ENCODE measurements at regions of chr14 and their contacts with region 1.

Region 1: DNA sequence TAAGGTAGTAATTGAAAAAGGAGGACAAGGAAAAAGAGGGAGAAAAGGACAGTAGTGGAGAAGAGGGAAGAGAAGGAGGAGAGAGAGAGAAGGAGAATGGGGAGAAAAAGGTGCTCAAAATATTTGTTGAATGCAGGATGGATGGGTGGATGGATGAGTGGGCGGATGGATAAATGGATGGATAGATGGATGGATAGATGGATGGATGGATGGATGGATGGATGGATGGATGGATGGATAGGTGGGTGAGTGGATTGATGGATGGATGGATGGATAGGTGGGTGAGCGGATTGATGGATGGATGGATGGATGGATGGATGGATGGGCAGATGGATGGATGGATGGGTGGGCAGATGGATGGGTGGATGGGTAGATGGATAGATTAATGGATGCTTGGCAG is 21.3 kb upstream of the C14orf132 start:
- DNase-seq: no peak
- ATAC-seq: no peak
- H3K4me3 ChIP-seq: no peak overlapping the region
- H3K27ac ChIP-seq: no peak overlapping the region
- H3K4me1 ChIP-seq: no peaks in the 10 kb centered on the region
- H3K27me3 ChIP-seq: peaks cover 24% of the 10 kb centered on the region
- CTCF ChIP-seq: no peak

Region 2: DNA sequence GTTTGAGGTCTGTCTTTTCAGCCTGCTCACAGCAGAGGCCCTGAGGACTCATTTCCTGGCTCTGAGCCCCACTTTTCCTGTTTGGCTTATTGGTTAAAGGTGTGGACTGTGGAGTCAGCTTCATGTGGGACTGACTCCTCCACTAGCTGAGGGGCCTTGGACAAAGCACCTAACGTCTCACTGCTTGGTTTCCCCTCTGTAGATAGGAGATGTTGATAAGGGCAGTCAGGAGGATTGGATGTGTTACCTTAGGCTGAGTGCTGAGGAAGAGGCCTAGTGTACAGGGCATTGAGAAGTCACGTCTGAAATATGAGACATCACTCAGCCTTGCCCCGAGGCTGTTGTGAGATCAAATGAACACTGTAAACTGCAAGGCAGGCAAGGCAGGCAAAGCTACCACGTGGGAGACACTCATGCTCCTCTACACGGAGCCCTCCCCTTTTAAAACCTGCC is 276.8 kb before region 1 on chr14:
- CTCF ChIA-PET with region 1: no interaction called
- POLR2A ChIA-PET with region 1: interaction called, 10 read pairs
- intact Hi-C with region 1: no loop called
- DNase-seq: peak; percentile 75
- ATAC-seq: no peak; the same call in 1 of the 2 replicates
- H3K4me3 ChIP-seq: no peak overlapping the region
- H3K27ac ChIP-seq: peak overlapping the region; percentile 59
- H3K4me1 ChIP-seq: peaks cover 12% of the 10 kb centered on the region
- H3K27me3 ChIP-seq: no peaks in the 10 kb centered on the region
- CTCF ChIP-seq: no peak

Region 3: DNA sequence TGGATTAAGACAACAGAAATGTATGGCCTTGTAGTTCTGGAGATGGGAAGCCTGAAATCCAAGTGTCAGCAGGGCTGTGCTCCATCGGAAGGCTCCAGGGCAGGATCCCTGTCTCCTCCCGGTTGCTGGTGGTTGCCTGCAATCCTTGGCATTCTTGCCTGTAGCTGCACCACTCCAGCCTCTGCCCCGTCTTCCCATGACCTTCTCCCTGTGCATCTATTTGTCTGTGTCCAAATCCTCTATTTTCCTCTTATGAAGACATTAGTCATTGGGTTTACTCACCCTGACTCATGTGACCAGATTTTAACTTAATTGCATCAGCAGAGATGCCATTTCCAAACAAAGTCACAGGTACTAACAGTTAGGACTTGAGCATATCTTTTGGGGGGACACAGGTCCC is 126.1 kb before region 1 on chr14:
- CTCF ChIA-PET with region 1: no interaction called
- POLR2A ChIA-PET with region 1: no interaction called
- intact Hi-C with region 1: no loop called
- DNase-seq: peak; percentile 70
- ATAC-seq: peak; percentile 43; the same call in 1 of the 2 replicates
- H3K4me3 ChIP-seq: no peak overlapping the region
- H3K27ac ChIP-seq: no peak overlapping the region
- H3K4me1 ChIP-seq: 0 out of 2 replicates have a peak, but pooled peaks cover 3% of the 10 kb centered on the region
- H3K27me3 ChIP-seq: peaks cover 36% of the 10 kb centered on the region
- CTCF ChIP-seq: no peak

Region 4: GRCh38 chr14:95998656-95999055 is 19.2 kb before region 1 on chr14:
- CTCF ChIA-PET with region 1: no interaction called
- POLR2A ChIA-PET with region 1: no interaction called
- intact Hi-C with region 1: no loop called
- DNase-seq: peak; percentile 33
- ATAC-seq: no peak
- H3K4me3 ChIP-seq: no peak overlapping the region
- H3K27ac ChIP-seq: no peak overlapping the region
- H3K4me1 ChIP-seq: no peaks in the 10 kb centered on the region
- H3K27me3 ChIP-seq: no peaks in the 10 kb centered on the region
- CTCF ChIP-seq: peak; percentile 44

Region 5: GRCh38 chr14:96239759-96240158 is 221.9 kb after region 1 on chr14:
- CTCF ChIA-PET with region 1: no interaction called
- POLR2A ChIA-PET with region 1: no interaction called
- intact Hi-C with region 1: no loop called
- DNase-seq: no peak
- ATAC-seq: no peak
- H3K4me3 ChIP-seq: no peak overlapping the region
- H3K27ac ChIP-seq: no peak overlapping the region
- H3K4me1 ChIP-seq: no peaks in the 10 kb centered on the region
- H3K27me3 ChIP-seq: peaks cover 18% of the 10 kb centered on the region
- CTCF ChIP-seq: no peak

Region 6: DNA sequence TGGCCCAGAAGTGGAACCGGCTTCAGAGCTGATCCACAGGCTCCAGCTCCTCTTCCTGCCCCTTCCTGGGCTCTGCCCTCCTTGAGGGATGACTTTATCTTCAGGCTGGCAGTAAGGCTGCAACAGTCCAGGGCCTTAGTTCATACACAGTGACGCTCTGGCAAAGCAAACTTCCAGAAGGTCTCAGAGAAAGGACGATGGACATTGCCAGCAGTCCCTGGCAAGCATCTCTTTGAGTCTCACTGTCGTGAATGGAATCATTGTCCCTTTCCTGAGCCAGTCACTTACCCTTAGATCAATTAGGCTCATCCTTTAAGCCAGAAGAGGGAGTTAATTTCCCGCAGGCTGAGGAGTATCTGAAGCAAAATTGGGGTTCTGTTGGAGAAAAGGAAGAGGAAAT is 382.6 kb after region 1 on chr14:
- CTCF ChIA-PET with region 1: no interaction called
- POLR2A ChIA-PET with region 1: no interaction called
- intact Hi-C with region 1: no loop called
- DNase-seq: no peak
- ATAC-seq: no peak
- H3K4me3 ChIP-seq: no peak overlapping the region
- H3K27ac ChIP-seq: no peak overlapping the region
- H3K4me1 ChIP-seq: no peaks in the 10 kb centered on the region
- H3K27me3 ChIP-seq: peaks cover 21% of the 10 kb centered on the region; the same call in 1 of the 2 replicates
- CTCF ChIP-seq: no peak

Measured in PC-3 (cell line).